PC-9 (cell line): ENCODE measurements at regions of chr9 and their contacts with region 1.

Region 1: GRCh38 chr9:127785023-127785932 is 556 bp upstream of the CDK9 start:
- DNase-seq: peak; percentile 47 to 91
- H3K4me3 ChIP-seq: peak overlapping the region; percentile 99
- H3K27ac ChIP-seq: no peak overlapping the region
- H3K4me1 ChIP-seq: peaks cover 8% of the 10 kb centered on the region
- H3K27me3 ChIP-seq: no peaks in the 10 kb centered on the region
- CTCF ChIP-seq: peak; percentile 94

Region 2: DNA sequence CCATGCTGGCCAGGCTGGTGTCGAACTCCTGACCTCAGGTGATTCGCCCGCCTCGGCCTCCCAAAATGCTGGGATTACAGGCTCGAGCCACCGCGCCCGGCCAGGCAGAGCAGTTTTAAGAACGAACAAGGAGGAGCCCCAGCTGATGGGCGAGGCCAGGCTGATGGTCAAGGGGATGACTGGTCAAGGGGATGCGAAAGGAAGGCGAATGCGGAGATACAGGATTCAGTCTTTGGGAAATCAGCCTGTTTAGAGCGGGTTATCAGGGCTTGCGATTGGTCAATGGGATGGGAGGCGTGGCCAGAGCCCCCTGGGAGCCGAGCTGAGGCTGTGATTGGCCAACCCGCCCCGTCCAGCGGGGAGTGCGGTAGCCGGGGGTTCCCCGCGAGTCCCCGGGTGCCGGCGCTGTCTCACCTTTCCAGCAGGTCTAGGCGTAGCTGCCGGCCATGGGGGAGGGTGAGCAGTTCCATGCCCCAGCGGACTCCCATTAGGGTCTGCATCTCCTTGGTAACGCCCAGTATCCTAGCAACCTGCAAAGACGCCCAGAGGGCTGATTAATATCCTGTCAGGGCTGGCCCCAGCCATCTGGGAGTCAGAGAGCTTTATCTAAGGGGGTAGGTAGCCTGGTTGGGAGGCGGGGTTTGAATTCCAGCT is 42.7 kb before region 1 on chr9:
- CTCF ChIA-PET with region 1: no interaction called
- POLR2A ChIA-PET with region 1: interaction called, 3 read pairs
- intact Hi-C with region 1: loop called (anchors 1 kb)
- DNase-seq: peak; percentile 49 to 68
- H3K4me3 ChIP-seq: no peak overlapping the region
- H3K27ac ChIP-seq: no peak overlapping the region
- H3K4me1 ChIP-seq: peaks cover 24% of the 10 kb centered on the region
- H3K27me3 ChIP-seq: peaks cover 13% of the 10 kb centered on the region; the same call in 1 of the 2 replicates
- CTCF ChIP-seq: no peak

Region 3: GRCh38 chr9:127796225-127796813 is 11.0 kb after region 1 on chr9:
- CTCF ChIA-PET with region 1: interaction called, 12 read pairs
- POLR2A ChIA-PET with region 1: interaction called, 23 read pairs
- intact Hi-C with region 1: no loop called
- DNase-seq: no peak
- H3K4me3 ChIP-seq: no peak overlapping the region
- H3K27ac ChIP-seq: no peak overlapping the region
- H3K4me1 ChIP-seq: peaks cover 21% of the 10 kb centered on the region
- H3K27me3 ChIP-seq: no peaks in the 10 kb centered on the region
- CTCF ChIP-seq: no peak

Region 4: GRCh38 chr9:127869310-127870152 is 84.3 kb after region 1 on chr9:
- CTCF ChIA-PET with region 1: interaction called, 7 read pairs
- POLR2A ChIA-PET with region 1: no interaction called
- intact Hi-C with region 1: loop called (anchors 2 kb)
- DNase-seq: peak; percentile 64 to 94
- H3K4me3 ChIP-seq: no peak overlapping the region
- H3K27ac ChIP-seq: no peak overlapping the region
- H3K4me1 ChIP-seq: peaks cover 4% of the 10 kb centered on the region; the same call in 1 of the 2 replicates
- H3K27me3 ChIP-seq: no peaks in the 10 kb centered on the region
- CTCF ChIP-seq: peak; percentile 91